ENCODE measurements at regions of chr20 and their contacts with region 1.

Region 1: DNA sequence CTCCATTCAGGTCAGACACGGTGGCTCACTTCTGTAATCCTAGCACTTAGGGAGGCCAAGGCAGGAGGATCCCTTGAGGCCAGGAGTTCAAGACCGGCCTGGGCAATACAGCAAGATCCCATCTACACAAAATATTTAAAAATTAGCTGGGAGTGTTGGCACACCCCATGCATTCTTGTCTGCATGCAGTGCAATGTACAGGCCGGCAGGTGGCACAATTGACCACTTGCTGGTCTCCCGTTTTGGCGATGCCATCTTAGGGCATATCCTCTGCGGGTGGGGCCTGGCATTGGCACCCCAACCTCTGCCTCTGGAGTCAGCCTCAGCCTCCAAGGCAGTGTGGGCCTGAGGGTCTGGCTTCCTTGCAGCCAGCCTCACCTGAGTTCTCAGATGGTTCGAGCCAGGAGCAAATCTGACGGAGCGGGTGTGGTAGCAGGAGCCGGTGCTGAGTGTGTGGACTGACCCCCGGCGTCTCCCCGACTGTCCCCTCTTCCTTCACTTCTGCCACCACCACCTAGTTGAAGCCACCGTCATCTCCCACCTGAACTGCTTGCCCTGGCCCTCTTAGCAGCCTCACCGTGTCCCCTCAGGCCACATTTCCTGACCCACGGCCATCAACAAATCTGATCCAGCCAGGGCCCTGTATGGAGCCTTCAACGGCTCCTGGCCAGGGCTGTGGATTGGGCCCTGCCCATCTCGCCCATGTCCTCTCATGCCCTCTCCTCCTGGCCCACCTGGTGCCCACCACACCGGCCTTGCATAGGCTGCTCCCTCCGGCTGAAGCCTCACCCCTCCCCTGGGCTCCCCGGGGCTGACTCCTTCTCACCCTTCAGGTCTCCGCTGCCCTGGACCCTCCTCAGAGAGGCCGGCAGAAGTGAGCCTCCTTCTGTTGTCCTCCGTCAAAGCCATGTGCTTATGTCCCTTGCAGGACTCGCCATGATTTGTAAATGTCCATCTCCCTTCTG is 44.0 kb downstream of the EFCAB8 start:
- DNase-seq: peak; percentile 50 to 85
- ATAC-seq: peak; percentile 73 to 93 (median 89)
- H3K4me3 ChIP-seq: no peak overlapping the region
- H3K4me3 Mint-ChIP-seq: no peak overlapping the region
- H3K27ac ChIP-seq: no peak overlapping the region
- H3K27ac Mint-ChIP-seq: no peak overlapping the region
- H3K4me1 ChIP-seq: peaks cover 5% of the 10 kb centered on the region
- H3K4me1 Mint-ChIP-seq: peaks cover 6 to 7% of the 10 kb centered on the region in 2 donors
- H3K27me3 ChIP-seq: no peaks in the 10 kb centered on the region
- H3K27me3 Mint-ChIP-seq: no peaks in the 10 kb centered on the region
- CTCF ChIP-seq: peak; percentile 88

Region 2: DNA sequence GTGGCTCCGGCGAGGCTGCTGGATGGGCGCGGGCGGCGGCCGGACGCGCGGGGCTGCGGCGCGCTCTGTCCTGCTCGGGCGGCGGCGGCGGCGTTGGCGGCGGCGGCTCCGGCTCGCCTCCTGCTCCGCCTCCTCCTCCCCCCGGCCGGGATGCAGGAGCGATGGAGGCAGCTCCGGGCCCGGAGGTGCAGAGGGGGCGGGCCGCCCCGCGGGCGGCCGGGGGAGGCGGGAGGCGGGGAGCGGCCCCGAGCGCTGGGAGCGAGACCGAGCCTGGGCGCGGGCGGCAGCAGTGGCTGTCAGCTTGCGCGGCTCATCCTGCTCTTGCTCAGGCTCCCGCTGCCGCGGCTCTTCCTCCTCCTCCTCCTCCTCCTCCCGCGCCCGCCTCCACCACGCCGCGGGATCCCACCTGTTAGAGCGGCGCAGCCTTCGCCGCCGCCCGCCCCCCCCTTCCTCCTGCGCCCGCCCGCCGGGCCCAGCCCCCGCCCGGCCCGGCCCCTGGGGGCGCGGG is 317.7 kb before region 1 on chr20 and contains the start of gene NOL4L:
- intact Hi-C with region 1: no loop called
- DNase-seq: peak in 1 of 2 donors; percentile 67
- ATAC-seq: peak; percentile 16 to 33 (median 30)
- H3K4me3 ChIP-seq: peak within 1 kb of the TSS; percentile 58
- H3K4me3 Mint-ChIP-seq: peak within 1 kb of the TSS; percentile 96
- H3K27ac ChIP-seq: no peak within 1 kb of the TSS
- H3K27ac Mint-ChIP-seq: peak within 1 kb of the TSS; percentile 80 to 90
- H3K4me1 ChIP-seq: peaks cover 44% of the 10 kb centered on the region
- H3K4me1 Mint-ChIP-seq: peaks cover 41 to 58% of the 10 kb centered on the region in 2 donors
- H3K27me3 ChIP-seq: no peaks in the 10 kb centered on the region
- H3K27me3 Mint-ChIP-seq: no peaks in the 10 kb centered on the region
- CTCF ChIP-seq: no peak
- total RNA-seq, gene NOL4L: 101 to 136 (median 114) TPM

Region 3: DNA sequence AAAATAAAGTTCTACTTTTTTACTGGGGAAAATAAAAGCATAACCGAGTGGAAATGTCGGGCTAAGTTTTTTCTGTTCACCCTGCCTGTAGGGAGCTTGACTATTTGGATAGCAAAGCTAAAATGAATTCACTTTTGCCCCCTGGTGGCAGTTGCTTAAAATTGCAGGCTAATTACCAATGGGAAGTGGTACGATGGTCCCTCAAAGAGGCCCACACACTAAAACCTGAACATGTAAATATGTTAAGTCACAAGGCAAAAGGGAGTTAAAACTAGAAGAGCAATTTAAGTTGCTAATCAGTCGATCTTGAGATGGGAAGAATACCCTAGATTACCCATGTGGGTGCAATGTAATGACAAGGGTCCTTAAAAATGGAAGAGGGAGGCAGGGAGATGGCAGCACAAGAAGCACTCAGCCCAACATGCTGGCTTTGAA is 102.4 kb after region 1 on chr20:
- intact Hi-C with region 1: loop called (anchors 1 kb)
- DNase-seq: peak in 1 of 2 donors; percentile 71
- ATAC-seq: no peak
- H3K4me3 ChIP-seq: no peak overlapping the region
- H3K4me3 Mint-ChIP-seq: no peak overlapping the region
- H3K27ac ChIP-seq: no peak overlapping the region
- H3K27ac Mint-ChIP-seq: no peak overlapping the region
- H3K4me1 ChIP-seq: no peaks in the 10 kb centered on the region
- H3K4me1 Mint-ChIP-seq: no peaks in the 10 kb centered on the region
- H3K27me3 ChIP-seq: no peaks in the 10 kb centered on the region
- H3K27me3 Mint-ChIP-seq: no peaks in the 10 kb centered on the region
- CTCF ChIP-seq: peak; percentile 42

Region 4: DNA sequence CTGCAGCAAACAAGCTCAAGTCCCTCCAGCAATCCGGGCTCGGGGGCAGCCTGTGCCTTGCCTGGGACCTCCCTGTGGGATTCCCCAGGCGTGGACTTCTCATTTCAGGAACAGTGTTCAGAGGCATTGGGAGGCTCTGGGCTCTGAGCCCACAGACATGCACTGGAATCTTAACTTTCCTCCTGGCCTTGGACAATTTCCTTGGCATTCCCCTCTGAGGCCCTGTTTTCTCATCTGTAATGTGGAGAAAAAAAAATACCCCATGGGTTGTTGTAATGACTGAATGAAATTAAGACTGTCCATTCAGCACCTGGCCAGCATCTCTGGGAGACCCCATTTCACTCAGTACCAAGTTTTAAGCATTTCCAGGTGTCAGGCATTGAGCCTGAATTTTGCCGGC is 194.3 kb after region 1 on chr20:
- intact Hi-C with region 1: loop called (anchors 2 kb)
- DNase-seq: no peak
- ATAC-seq: no peak
- H3K4me3 ChIP-seq: no peak overlapping the region
- H3K4me3 Mint-ChIP-seq: no peak overlapping the region
- H3K27ac ChIP-seq: no peak overlapping the region
- H3K27ac Mint-ChIP-seq: no peak overlapping the region
- H3K4me1 ChIP-seq: no peaks in the 10 kb centered on the region
- H3K4me1 Mint-ChIP-seq: no peaks in the 10 kb centered on the region
- H3K27me3 ChIP-seq: no peaks in the 10 kb centered on the region
- H3K27me3 Mint-ChIP-seq: peaks cover 0 to 7% of the 10 kb centered on the region in 2 donors
- CTCF ChIP-seq: no peak

Region 5: GRCh38 chr20:33299111-33299603 is 396.4 kb after region 1 on chr20:
- intact Hi-C with region 1: loop called (anchors 1 kb)
- DNase-seq: peak; percentile 72 to 84
- ATAC-seq: peak; percentile 78 to 96 (median 85)
- H3K4me3 ChIP-seq: no peak overlapping the region
- H3K4me3 Mint-ChIP-seq: no peak overlapping the region
- H3K27ac ChIP-seq: no peak overlapping the region
- H3K27ac Mint-ChIP-seq: no peak overlapping the region
- H3K4me1 ChIP-seq: peaks cover 6% of the 10 kb centered on the region
- H3K4me1 Mint-ChIP-seq: peaks cover 0 to 5% of the 10 kb centered on the region in 2 donors
- H3K27me3 ChIP-seq: no peaks in the 10 kb centered on the region
- H3K27me3 Mint-ChIP-seq: peaks cover 14 to 16% of the 10 kb centered on the region in 2 donors
- CTCF ChIP-seq: peak; percentile 96